ENCODE measurements at regions of chr17 and their contacts with region 1.

Region 1: DNA sequence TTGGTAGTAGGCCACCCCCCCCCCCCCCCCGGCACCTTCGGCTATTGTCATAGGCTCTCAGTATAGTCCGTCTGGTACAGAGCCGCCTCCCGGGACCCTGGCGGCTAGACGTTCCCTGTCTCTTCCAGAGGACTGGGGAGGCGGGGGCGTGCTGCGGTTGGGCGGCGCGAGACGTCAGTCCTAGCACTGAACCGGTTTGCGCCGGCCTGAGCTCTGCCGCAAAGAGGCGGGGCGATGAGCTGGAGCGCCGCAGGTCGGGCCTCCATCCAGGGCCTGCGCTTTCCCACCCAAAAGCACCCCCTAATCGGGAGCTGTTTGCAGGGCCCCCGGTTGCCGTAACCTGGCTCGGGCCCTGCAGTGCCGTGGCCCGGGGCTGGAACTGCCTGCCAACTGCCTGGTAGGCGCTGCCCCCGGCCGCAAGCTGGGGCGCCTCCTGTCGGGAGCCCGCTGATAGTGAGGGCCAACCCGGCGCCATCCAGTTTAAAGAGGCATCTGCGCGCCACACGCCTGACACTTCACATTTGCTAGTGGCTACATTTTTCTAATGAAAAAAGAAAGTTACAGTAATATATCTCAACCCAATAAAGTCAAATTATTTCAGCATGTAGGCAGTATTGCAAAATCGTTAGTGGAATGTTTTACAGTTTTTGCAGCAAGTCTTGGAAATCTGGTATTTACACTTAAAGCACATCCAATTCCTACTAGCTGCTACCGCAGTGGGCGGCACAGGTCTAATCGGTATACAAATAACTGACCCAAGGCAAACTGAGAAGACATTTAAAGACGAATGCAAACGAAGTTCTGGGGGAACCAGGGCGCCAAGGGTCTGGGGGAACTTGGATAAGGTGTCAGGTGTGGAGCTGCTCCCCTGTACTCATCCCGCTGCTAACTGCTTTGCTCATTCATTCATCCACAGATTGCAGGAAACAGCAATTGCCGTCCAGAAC is 748 bp upstream of the USP22 start:
- DNase-seq: peak in 12 of 14 experiments; percentile 90 to 99 (median 94)
- ATAC-seq: peak; percentile 81
- H3K4me3 ChIP-seq: peak overlapping the region; percentile 73
- H3K4me3 Mint-ChIP-seq: peak overlapping the region; percentile 91
- H3K27ac ChIP-seq: peak overlapping the region; percentile 91 to 93
- H3K27ac Mint-ChIP-seq: peak overlapping the region; percentile 94
- H3K4me1 ChIP-seq: peaks cover 34% of the 10 kb centered on the region
- H3K4me1 Mint-ChIP-seq: peaks cover 42% of the 10 kb centered on the region
- H3K27me3 ChIP-seq: no peaks in the 10 kb centered on the region
- H3K27me3 Mint-ChIP-seq: no peaks in the 10 kb centered on the region
- CTCF ChIP-seq: peak; percentile 97

Region 2: GRCh38 chr17:20935740-20936139 is 107.8 kb before region 1 on chr17:
- CTCF ChIA-PET with region 1: no interaction called
- POLR2A ChIA-PET with region 1: no interaction called
- intact Hi-C with region 1: no loop called
- DNase-seq: no peak
- ATAC-seq: no peak
- H3K4me3 ChIP-seq: no peak overlapping the region
- H3K4me3 Mint-ChIP-seq: no peak overlapping the region
- H3K27ac ChIP-seq: no peak overlapping the region
- H3K27ac Mint-ChIP-seq: no peak overlapping the region
- H3K4me1 ChIP-seq: no peaks in the 10 kb centered on the region
- H3K4me1 Mint-ChIP-seq: no peaks in the 10 kb centered on the region
- H3K27me3 ChIP-seq: no peaks in the 10 kb centered on the region
- H3K27me3 Mint-ChIP-seq: peaks cover 4% of the 10 kb centered on the region
- CTCF ChIP-seq: no peak

Region 3: DNA sequence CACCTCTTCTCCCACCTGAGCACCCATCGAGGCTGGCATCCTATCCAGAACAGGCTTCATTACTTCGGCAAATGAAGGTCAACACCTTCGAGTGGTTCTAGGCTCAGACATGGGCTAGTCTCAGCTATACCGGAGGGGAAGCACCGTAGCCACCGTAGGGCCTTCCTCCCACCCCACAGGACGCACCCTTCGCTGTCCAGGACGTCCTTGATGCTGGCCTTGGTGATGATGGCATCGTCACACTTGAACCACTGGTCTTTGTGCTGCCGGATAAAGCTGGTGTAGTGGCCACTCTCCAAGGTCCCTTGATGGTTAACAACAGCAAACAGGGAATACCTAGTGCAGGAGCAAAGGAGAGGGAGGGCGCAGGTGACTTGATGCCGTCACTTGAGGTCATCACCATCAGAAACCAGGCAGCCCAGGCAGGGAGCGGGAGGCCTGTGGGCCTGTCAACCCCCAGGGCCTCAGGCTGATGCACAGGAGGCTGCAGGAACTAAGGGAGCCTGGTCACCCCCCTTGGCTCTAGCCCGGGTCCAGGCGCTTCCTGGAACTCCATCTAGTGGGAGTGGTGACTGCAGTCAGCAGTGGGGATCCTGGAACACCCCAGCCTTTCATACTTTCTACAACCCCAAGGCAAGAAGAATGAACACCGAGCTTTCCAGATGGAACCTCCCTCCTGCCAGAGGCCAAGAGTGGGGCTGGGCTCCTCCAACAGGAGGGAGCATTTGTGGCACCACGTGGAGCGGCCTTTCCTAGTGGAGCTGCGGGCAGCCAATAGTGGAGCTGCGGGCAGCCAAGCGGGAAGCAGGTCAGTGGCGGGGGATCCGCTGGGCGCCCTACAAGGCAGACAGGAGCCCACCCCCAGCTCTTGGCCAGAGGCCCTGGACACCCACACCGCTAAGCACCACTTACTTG is 39.3 kb before region 1 on chr17:
- CTCF ChIA-PET with region 1: interaction called, 5 read pairs
- POLR2A ChIA-PET with region 1: interaction called, 11 read pairs
- intact Hi-C with region 1: no loop called
- DNase-seq: no peak
- ATAC-seq: no peak
- H3K4me3 ChIP-seq: no peak overlapping the region
- H3K4me3 Mint-ChIP-seq: no peak overlapping the region
- H3K27ac ChIP-seq: no peak overlapping the region
- H3K27ac Mint-ChIP-seq: no peak overlapping the region
- H3K4me1 ChIP-seq: peaks cover 28% of the 10 kb centered on the region
- H3K4me1 Mint-ChIP-seq: peaks cover 11% of the 10 kb centered on the region
- H3K27me3 ChIP-seq: no peaks in the 10 kb centered on the region
- H3K27me3 Mint-ChIP-seq: no peaks in the 10 kb centered on the region
- CTCF ChIP-seq: no peak

Region 4: DNA sequence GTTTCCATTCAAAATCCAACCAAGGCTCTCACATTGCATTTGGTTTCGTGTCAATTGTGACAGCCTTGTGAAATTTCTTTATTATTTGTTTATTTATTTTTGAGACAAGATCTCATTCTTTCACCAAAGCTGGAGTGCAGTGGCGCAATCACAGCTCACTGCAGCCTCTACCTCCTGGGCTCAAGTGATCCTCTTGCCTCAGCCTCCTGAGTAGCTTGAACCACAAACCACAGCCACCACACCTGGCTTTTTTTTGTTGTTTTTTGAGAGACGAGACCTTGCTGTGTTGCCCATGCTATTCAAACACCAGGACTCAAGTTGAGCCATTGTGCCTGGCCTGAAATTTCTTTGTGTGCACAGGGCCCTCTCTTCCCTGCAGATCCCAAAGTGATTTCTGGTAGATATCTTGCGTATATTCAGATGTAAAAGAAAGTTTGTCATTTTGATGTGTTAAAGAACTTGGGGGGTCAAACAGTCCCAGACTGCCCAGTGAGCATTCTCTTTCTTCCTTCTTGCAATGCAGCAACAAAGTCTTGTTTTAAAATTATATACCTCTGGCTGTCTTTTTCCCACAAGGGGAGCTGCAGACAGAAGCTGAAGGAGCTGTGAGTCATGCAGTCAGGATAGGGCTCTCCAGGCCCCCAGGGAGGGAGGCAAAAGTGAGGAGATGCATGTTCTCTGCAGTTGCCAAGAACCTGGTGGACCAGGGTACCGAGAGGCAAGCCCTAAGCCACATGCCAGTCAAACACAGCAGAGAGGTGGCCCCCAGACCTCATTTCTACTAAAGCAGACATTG is 14.7 kb after region 1 on chr17:
- CTCF ChIA-PET with region 1: interaction called, 3 read pairs
- POLR2A ChIA-PET with region 1: interaction called, 12 read pairs
- intact Hi-C with region 1: no loop called
- DNase-seq: no peak
- ATAC-seq: no peak
- H3K4me3 ChIP-seq: no peak overlapping the region
- H3K4me3 Mint-ChIP-seq: no peak overlapping the region
- H3K27ac ChIP-seq: no peak overlapping the region
- H3K27ac Mint-ChIP-seq: no peak overlapping the region
- H3K4me1 ChIP-seq: no peaks in the 10 kb centered on the region
- H3K4me1 Mint-ChIP-seq: no peaks in the 10 kb centered on the region
- H3K27me3 ChIP-seq: peaks cover 0 to 4% of the 10 kb centered on the region in 2 experiments
- H3K27me3 Mint-ChIP-seq: peaks cover 13% of the 10 kb centered on the region
- CTCF ChIP-seq: no peak

Region 5: GRCh38 chr17:21126645-21127510 is 83.3 kb after region 1 on chr17 and contains the start of gene DHRS7B:
- CTCF ChIA-PET with region 1: interaction called, 7 read pairs
- POLR2A ChIA-PET with region 1: interaction called, 19 read pairs
- intact Hi-C with region 1: loop called (anchors 1 to 2 kb)
- DNase-seq: peak; percentile 93 to 98 (median 96)
- ATAC-seq: peak; percentile 86
- H3K4me3 ChIP-seq: peak within 1 kb of the TSS; percentile 68
- H3K4me3 Mint-ChIP-seq: peak within 1 kb of the TSS; percentile 93
- H3K27ac ChIP-seq: peak within 1 kb of the TSS; percentile 90 to 93
- H3K27ac Mint-ChIP-seq: peak within 1 kb of the TSS; percentile 93
- H3K4me1 ChIP-seq: peaks cover 18% of the 10 kb centered on the region
- H3K4me1 Mint-ChIP-seq: peaks cover 45% of the 10 kb centered on the region
- H3K27me3 ChIP-seq: no peaks in the 10 kb centered on the region
- H3K27me3 Mint-ChIP-seq: no peaks in the 10 kb centered on the region
- CTCF ChIP-seq: no peak
- total RNA-seq, gene DHRS7B: 4.9 to 5.2 TPM

Region 6: DNA sequence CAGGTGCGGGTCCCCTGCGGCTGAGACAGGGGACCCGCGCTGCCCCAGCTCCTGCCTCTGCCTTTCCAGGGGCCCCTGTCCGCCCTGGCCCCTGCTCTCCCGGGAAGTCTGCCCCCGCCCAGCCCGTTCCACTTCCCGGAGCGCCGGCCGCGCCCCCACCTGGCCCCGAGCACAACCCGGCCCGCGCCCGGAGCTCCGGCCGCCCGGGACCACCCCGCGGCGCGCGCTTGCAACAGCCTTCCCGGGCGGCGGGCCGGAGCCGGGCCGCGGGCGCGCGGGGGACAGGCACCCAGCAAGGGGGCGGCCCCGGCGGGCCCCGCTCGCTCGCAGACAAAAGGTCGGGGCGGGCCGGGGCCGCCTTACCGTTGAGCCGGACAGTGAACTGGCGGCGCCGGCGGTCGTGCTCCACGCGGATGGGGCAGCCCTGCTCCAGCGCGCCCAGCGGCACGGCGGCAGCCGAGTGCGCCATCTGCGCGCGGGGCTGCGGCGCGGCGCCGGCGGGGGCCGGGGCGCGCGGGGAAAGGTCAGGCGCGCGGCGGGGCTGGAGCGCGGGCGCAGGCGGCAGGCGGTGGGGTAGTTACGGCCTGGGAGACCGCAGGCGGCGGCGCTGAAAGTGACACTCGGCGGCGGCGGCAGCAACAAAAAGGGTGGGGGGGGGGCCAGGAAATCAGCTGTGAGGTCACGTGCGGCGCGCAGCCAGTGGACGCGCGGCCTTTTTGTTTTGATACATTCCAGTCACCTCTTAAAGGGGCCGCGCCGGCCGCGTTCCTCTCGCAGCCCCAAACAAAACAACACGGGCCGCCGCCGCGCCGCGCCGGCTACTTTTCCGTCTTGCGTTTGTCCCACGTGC is 209.5 kb after region 1 on chr17 and contains the start of gene NATD1:
- CTCF ChIA-PET with region 1: interaction called, 3 read pairs
- POLR2A ChIA-PET with region 1: interaction called, 14 read pairs
- intact Hi-C with region 1: no loop called
- DNase-seq: peak; percentile 64 to 92 (median 76)
- ATAC-seq: peak; percentile 80
- H3K4me3 ChIP-seq: peak within 1 kb of the TSS; percentile 67
- H3K4me3 Mint-ChIP-seq: peak within 1 kb of the TSS; percentile 93
- H3K27ac ChIP-seq: peak within 1 kb of the TSS; percentile 54 to 58
- H3K27ac Mint-ChIP-seq: peak within 1 kb of the TSS; percentile 94
- H3K4me1 ChIP-seq: peaks cover 27% of the 10 kb centered on the region
- H3K4me1 Mint-ChIP-seq: peaks cover 42% of the 10 kb centered on the region
- H3K27me3 ChIP-seq: no peaks in the 10 kb centered on the region
- H3K27me3 Mint-ChIP-seq: no peaks in the 10 kb centered on the region
- CTCF ChIP-seq: no peak
- total RNA-seq, gene NATD1: 5.9 to 6.1 TPM

Region 7: GRCh38 chr17:21284319-21285163 is 241.0 kb after region 1 on chr17 and contains the start of gene MAP2K3:
- CTCF ChIA-PET with region 1: interaction called, 7 read pairs
- POLR2A ChIA-PET with region 1: interaction called, 7 read pairs
- intact Hi-C with region 1: loop called (anchors 2 to 5 kb)
- DNase-seq: peak; percentile 80 to 98 (median 92)
- ATAC-seq: peak; percentile 66
- H3K4me3 ChIP-seq: peak within 1 kb of the TSS; percentile 98
- H3K4me3 Mint-ChIP-seq: peak within 1 kb of the TSS; percentile 98
- H3K27ac ChIP-seq: peak within 1 kb of the TSS; percentile 87 to 94
- H3K27ac Mint-ChIP-seq: peak within 1 kb of the TSS; percentile 98
- H3K4me1 ChIP-seq: peaks cover 69% of the 10 kb centered on the region
- H3K4me1 Mint-ChIP-seq: peaks cover 55% of the 10 kb centered on the region
- H3K27me3 ChIP-seq: no peaks in the 10 kb centered on the region
- H3K27me3 Mint-ChIP-seq: no peaks in the 10 kb centered on the region
- CTCF ChIP-seq: no peak
- total RNA-seq, gene MAP2K3: 36.8 to 38.5 TPM

Region 8: GRCh38 chr17:21551081-21551881 is 507.7 kb after region 1 on chr17:
- CTCF ChIA-PET with region 1: no interaction called
- POLR2A ChIA-PET with region 1: interaction called, 17 read pairs
- intact Hi-C with region 1: no loop called
- DNase-seq: peak; percentile 67 to 90 (median 80)
- ATAC-seq: peak; percentile 90
- H3K4me3 ChIP-seq: peak overlapping the region; percentile 73
- H3K4me3 Mint-ChIP-seq: peak overlapping the region; percentile 92
- H3K27ac ChIP-seq: no peak overlapping the region
- H3K27ac Mint-ChIP-seq: peak overlapping the region; percentile 39
- H3K4me1 ChIP-seq: peaks cover 14% of the 10 kb centered on the region
- H3K4me1 Mint-ChIP-seq: peaks cover 50% of the 10 kb centered on the region
- H3K27me3 ChIP-seq: peaks cover 3 to 4% of the 10 kb centered on the region in 2 experiments
- H3K27me3 Mint-ChIP-seq: peaks cover 13% of the 10 kb centered on the region
- CTCF ChIP-seq: no peak